AG04450 (cell line): ENCODE measurements at regions of chr6 and their contacts with region 1.

Region 1: GRCh38 chr6:105431226-105431625 is 28.3 kb upstream of the PREP start:
- DNase-seq: peak; percentile 15
- H3K4me3 ChIP-seq: no peak overlapping the region
- H3K27ac ChIP-seq: no peak overlapping the region
- H3K27me3 ChIP-seq: no peaks in the 10 kb centered on the region
- CTCF ChIP-seq: peak; percentile 58

Region 2: GRCh38 chr6:105484238-105485161 is 53.3 kb after region 1 on chr6:
- CTCF ChIA-PET with region 1: interaction called, 22 read pairs
- POLR2A ChIA-PET with region 1: no interaction called
- DNase-seq: no peak
- H3K4me3 ChIP-seq: no peak overlapping the region
- H3K27ac ChIP-seq: no peak overlapping the region
- H3K27me3 ChIP-seq: no peaks in the 10 kb centered on the region
- CTCF ChIP-seq: peak; percentile 94

Region 3: GRCh38 chr6:105509506-105510331 is 78.5 kb after region 1 on chr6:
- CTCF ChIA-PET with region 1: no interaction called
- POLR2A ChIA-PET with region 1: no interaction called
- DNase-seq: no peak
- H3K4me3 ChIP-seq: no peak overlapping the region
- H3K27ac ChIP-seq: no peak overlapping the region
- H3K27me3 ChIP-seq: no peaks in the 10 kb centered on the region
- CTCF ChIP-seq: peak; percentile 64

Region 4: DNA sequence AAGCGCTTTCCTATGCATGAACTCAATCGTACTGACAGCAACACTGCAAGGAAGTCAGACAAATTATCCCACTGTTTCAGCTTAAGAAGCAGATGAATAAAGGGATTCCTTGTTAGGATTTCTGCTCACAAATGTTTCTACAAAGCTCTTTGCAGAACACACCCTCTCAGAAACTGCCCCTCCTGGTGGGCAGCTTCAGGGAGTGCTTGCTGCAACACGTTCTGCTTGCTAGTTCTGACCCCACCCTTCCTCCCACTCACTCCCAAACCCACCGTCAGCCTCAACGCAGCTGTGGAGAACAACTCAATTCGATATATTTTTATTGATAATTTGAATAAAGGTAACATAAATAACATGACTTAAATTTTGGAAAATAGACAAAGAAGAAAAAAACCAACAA is 404.1 kb after region 1 on chr6:
- CTCF ChIA-PET with region 1: interaction called, 12 read pairs
- POLR2A ChIA-PET with region 1: no interaction called
- DNase-seq: no peak
- H3K4me3 ChIP-seq: no peak overlapping the region
- H3K27ac ChIP-seq: no peak overlapping the region
- H3K27me3 ChIP-seq: no peaks in the 10 kb centered on the region
- CTCF ChIP-seq: peak; percentile 54

Region 5: DNA sequence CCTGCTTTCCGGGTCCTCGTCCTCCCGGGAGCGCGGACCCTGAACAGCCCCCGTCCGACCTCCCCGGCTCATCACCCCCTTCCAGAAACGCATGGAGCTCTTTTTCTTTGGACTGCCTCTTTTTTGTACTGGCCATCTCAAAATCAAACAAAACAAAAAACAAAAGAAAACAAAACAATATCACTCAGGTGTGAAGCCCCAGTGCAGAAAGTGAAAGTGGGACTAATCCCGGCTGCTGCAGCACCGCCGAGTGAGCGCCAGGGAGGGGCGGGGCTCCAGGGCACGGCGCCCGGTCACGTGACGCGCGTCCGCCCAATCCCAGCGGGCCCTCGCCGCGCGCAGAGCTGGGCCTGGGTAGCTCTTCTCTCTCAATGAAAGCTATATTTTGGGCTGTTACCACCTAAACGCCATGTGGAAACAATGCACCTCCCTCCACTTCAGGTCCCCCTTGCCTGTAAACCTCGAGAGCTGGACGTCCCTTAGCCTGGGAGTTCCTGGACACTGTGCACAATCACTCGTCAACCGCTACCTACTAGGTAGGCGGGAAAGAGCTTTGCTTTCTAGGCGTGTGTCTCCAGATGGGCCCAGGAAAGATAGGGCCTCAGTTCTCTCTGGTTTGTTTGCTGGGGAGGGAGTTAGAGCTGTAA is 561.2 kb after region 1 on chr6:
- CTCF ChIA-PET with region 1: interaction called, 10 read pairs
- POLR2A ChIA-PET with region 1: no interaction called
- DNase-seq: no peak
- H3K4me3 ChIP-seq: peak overlapping the region; percentile 75
- H3K27ac ChIP-seq: no peak overlapping the region
- H3K27me3 ChIP-seq: no peaks in the 10 kb centered on the region
- CTCF ChIP-seq: no peak

Region 6: GRCh38 chr6:106715922-106716321 is 1284.7 kb after region 1 on chr6:
- CTCF ChIA-PET with region 1: no interaction called
- POLR2A ChIA-PET with region 1: no interaction called
- DNase-seq: no peak
- H3K4me3 ChIP-seq: no peak overlapping the region
- H3K27ac ChIP-seq: no peak overlapping the region
- H3K27me3 ChIP-seq: peaks cover 5% of the 10 kb centered on the region
- CTCF ChIP-seq: no peak